Gastrocnemius medialis (tissue), 4 donors: ENCODE measurements at regions of chr11 and their contacts with region 1.

Region 1: DNA sequence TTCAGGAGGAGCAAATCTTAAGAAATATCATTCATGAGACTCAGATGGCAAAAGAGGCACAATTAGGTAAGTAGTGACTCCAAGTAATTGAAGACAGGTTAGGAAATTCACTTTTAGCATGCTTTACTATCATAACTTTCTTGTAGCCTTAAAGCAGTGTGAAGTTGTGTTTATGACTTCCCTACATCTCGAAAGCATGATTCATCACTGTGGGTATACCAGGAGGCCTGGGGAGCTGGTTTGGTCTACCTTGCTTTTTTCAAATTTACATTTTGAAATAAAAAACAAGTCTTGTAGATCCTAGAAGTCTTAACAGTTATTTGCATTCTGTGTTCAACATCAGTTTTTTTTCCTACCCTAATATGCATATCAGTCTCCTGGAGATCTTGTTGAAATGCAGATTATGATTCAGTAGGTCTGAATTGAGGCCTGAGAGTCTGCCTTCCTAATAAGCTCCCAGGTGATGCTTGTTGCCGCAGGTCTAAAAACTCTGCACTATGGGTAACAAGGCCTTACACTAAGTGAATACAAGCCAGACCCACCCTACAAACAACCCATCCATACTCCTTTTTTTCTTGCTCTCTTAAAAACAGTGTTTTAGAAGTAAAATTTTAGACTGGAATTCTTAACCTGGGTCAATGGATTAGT is 41.4 kb downstream of the TTC17 start:
- DNase-seq: no peak
- ATAC-seq: no peak
- H3K4me3 ChIP-seq: no peak overlapping the region
- H3K27ac ChIP-seq: no peak overlapping the region
- H3K4me1 ChIP-seq: no peaks in the 10 kb centered on the region
- H3K27me3 ChIP-seq: no peaks in the 10 kb centered on the region
- CTCF ChIP-seq: no peak
- POLR2A ChIP-seq: no peak

Region 2: DNA sequence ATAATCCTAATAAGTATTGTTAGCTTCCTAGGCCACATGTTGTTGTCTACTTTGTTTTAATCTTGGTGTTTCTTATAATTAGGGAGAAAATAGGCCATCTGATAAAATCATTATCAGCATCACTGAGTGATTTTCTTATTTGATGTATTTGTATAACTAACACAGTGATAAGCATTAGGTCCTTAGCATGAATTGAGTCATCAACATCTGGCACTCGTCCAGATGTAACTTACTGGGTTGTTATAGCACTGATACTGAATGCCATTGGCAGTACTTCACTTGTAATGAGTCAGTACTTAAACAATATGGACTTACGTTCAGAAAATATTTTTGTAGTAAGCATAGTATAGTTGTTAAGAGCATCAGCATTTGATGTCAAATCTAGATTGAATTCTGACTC is 72.1 kb before region 1 on chr11:
- in situ Hi-C with region 1: loop called in 1 of 4 experiments (anchors 10 kb)
- intact Hi-C with region 1: loop called (anchors 10 kb)
- DNase-seq: no peak
- ATAC-seq: no peak
- H3K4me3 ChIP-seq: no peak overlapping the region
- H3K27ac ChIP-seq: no peak overlapping the region
- H3K4me1 ChIP-seq: no peaks in the 10 kb centered on the region
- H3K27me3 ChIP-seq: no peaks in the 10 kb centered on the region
- CTCF ChIP-seq: no peak
- POLR2A ChIP-seq: no peak

Region 3: DNA sequence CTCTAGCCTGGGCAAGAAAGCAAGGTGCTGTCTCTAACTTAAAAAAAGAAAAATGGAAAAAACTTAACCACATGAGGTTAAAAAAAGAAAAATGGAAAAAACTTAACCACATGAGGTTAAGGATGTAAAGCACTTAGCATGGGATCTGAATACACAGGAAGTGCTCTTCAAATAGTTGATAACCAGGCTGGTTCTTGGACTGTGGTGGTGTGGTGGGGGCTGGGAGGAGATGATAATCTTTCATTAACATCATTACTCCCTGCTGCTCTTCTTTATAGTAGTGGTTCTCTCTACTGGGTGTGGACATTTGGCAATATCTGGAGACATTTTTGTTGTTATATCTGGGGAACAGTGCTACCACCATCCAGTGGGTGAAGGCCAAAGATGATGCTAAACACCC is 47.0 kb after region 1 on chr11:
- in situ Hi-C with region 1: no loop called
- intact Hi-C with region 1: no loop called
- DNase-seq: no peak
- ATAC-seq: no peak
- H3K4me3 ChIP-seq: no peak overlapping the region
- H3K27ac ChIP-seq: no peak overlapping the region
- H3K4me1 ChIP-seq: no peaks in the 10 kb centered on the region
- H3K27me3 ChIP-seq: no peaks in the 10 kb centered on the region
- CTCF ChIP-seq: no peak
- POLR2A ChIP-seq: no peak